Astrocyte of the cerebellum (primary cell): ENCODE measurements at regions of chr17 and their contacts with region 1.

Region 1: GRCh38 chr17:34788696-34789095 is 172.6 kb downstream of the CCT6B start:
- DNase-seq: no peak
- H3K4me3 ChIP-seq: no peak overlapping the region
- CTCF ChIP-seq: no peak

Region 2: GRCh38 chr17:34740565-34741520 is 47.9 kb before region 1 on chr17:
- in situ Hi-C with region 1: loop called (anchors 5 kb)
- DNase-seq: no peak
- H3K4me3 ChIP-seq: no peak overlapping the region
- CTCF ChIP-seq: no peak

Region 3: DNA sequence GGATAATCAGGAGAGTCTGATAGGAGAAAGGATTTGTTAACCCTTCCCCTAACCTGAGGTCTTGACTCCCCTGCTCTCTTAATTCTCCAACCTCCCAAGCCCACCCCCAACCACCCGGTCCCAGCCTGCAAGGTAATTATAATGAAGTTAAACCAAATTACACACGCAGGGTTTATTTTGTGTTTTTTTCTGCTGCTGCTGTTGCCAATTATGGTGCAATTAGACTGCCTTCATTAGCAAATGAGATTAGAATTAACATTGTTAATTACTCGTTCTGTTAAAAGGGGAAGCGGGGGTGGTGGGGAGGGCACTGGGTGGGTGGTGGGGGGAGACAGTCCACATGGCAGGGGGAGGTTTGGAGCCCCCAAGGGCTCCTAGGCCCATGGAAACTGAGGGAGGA is 43.7 kb after region 1 on chr17:
- in situ Hi-C with region 1: loop called (anchors 5 kb)
- DNase-seq: no peak
- H3K4me3 ChIP-seq: no peak overlapping the region
- CTCF ChIP-seq: no peak